Activated CD8-positive, alpha-beta T cell treated with anti-CD3 and anti-CD28 coated beads, Interleukin-2, amount 10 ng/mL, durations not matched to agents 7 days and 5 days (primary cell): ENCODE measurements at regions of chr17 and their contacts with region 1.

Region 1: GRCh38 chr17:4199818-4200402 is 56.9 kb downstream of the CYB5D2 start:
- DNase-seq: peak; percentile 53
- ATAC-seq: peak; percentile 57
- H3K4me3 Mint-ChIP-seq: no peak overlapping the region
- H3K27ac Mint-ChIP-seq: no peak overlapping the region
- H3K4me1 Mint-ChIP-seq: no peaks in the 10 kb centered on the region
- H3K27me3 Mint-ChIP-seq: no peaks in the 10 kb centered on the region

Region 2: DNA sequence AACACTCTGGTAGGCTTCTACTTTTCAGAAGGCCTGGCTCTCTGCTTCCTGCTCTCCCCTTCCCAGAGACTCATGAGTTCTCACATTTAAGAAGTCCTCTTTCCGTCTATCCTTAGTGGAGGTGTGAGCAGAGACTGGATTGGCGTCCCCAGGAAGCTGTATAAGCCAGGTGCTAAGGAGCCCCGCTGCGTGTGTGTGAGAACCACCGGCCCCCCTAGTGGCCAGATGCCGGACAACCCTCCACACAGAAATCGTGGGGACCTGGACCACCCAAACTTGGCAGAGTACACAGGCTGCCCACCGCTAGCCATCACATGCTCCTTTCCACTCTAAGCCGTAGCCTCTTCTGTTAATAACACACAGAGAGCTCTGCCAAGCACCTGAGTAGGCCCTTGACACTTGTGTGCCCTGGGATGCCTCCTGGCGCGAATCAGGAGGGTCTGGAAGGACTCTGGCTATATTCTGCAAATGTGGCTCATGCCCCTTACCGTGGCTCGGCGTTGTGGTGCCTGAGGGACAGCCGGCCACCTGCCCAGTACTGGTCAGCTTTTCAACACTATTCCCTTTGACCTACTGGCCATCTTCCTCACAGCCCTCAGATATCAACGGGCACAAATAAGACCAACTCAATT is 43.0 kb before region 1 on chr17:
- CTCF ChIA-PET with region 1: no interaction called
- POLR2A ChIA-PET with region 1: no interaction called
- DNase-seq: no peak
- ATAC-seq: no peak
- H3K4me3 Mint-ChIP-seq: no peak overlapping the region
- H3K27ac Mint-ChIP-seq: no peak overlapping the region
- H3K4me1 Mint-ChIP-seq: peaks cover 6% of the 10 kb centered on the region
- H3K27me3 Mint-ChIP-seq: no peaks in the 10 kb centered on the region

Region 3: GRCh38 chr17:4175921-4176807 is 23.7 kb before region 1 on chr17:
- CTCF ChIA-PET with region 1: interaction called, 10 read pairs
- POLR2A ChIA-PET with region 1: no interaction called
- DNase-seq: peak; percentile 61
- ATAC-seq: peak; percentile 92
- H3K4me3 Mint-ChIP-seq: peak overlapping the region; percentile 63
- H3K27ac Mint-ChIP-seq: peak overlapping the region; percentile 99
- H3K4me1 Mint-ChIP-seq: peaks cover 46% of the 10 kb centered on the region
- H3K27me3 Mint-ChIP-seq: no peaks in the 10 kb centered on the region

Region 4: DNA sequence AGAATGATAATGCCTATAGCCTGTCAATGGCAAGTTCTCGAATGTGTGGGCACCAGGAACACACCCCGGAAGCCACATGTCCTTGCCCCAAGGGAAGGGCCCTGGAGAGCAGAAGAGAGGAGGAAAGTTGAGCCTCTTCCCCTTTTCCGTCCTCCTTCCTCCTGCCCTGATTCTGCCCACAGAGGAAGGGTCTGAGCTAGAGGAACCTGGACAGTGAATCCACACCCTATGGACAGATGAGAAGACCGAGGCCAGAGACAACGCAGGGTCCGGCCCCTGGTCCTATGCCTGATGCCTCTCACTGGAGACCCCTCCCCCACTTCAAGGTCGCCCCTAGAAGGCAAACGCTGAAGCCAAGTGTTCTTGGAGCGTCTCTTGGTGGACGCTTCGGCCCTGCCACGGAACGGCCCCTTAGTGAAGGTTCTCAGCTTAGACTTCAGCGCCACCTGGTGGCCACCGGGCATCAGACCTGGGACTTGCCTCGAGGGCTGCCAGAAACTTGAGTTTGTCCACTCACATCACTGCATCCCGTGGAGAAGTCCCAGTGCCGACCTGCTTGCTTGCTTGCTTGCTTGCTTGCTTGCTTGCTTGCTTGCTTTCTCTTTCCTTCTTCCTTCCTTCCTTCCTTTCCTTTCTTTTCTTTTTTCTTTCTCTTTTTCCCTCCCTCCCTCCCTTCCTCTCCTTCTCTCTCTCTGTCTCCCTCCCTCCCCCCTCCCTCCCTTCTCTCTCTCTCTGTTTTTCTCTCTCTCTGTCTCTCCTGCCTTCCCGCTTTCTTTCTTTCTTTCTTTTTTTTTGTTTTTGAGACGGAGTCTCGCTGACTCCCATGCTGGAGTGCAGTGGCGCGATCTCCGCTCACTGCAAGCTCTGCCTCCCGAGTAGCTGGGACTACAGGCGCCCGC is 213.3 kb after region 1 on chr17:
- CTCF ChIA-PET with region 1: interaction called, 10 read pairs
- POLR2A ChIA-PET with region 1: no interaction called
- DNase-seq: peak; percentile 93
- ATAC-seq: peak; percentile 99
- H3K4me3 Mint-ChIP-seq: peak overlapping the region; percentile 36
- H3K27ac Mint-ChIP-seq: no peak overlapping the region
- H3K4me1 Mint-ChIP-seq: peaks cover 8% of the 10 kb centered on the region
- H3K27me3 Mint-ChIP-seq: no peaks in the 10 kb centered on the region